Caco-2 (cell line): ENCODE measurements at regions of chr4 and their contacts with region 1.

Region 1: GRCh38 chr4:146522098-146522868 is 543 bp upstream of the SLC10A7 start:
- DNase-seq: peak; percentile 79 to 81
- H3K4me3 ChIP-seq: peak overlapping the region; percentile 88
- H3K4me3 Mint-ChIP-seq: no peak overlapping the region
- H3K27ac Mint-ChIP-seq: no peak overlapping the region
- H3K4me1 ChIP-seq: peaks cover 14% of the 10 kb centered on the region
- H3K4me1 Mint-ChIP-seq: peaks cover 5% of the 10 kb centered on the region
- H3K27me3 ChIP-seq: no peaks in the 10 kb centered on the region
- H3K27me3 Mint-ChIP-seq: no peaks in the 10 kb centered on the region
- CTCF ChIP-seq: no peak

Region 2: GRCh38 chr4:146342600-146343192 is 179.6 kb before region 1 on chr4:
- CTCF ChIA-PET with region 1: no interaction called
- POLR2A ChIA-PET with region 1: no interaction called
- intact Hi-C with region 1: loop called (anchors 2 kb)
- DNase-seq: peak in 1 of 2 experiments; percentile 39
- H3K4me3 ChIP-seq: no peak overlapping the region
- H3K4me3 Mint-ChIP-seq: no peak overlapping the region
- H3K27ac Mint-ChIP-seq: no peak overlapping the region
- H3K4me1 ChIP-seq: no peaks in the 10 kb centered on the region
- H3K4me1 Mint-ChIP-seq: no peaks in the 10 kb centered on the region
- H3K27me3 ChIP-seq: no peaks in the 10 kb centered on the region
- H3K27me3 Mint-ChIP-seq: no peaks in the 10 kb centered on the region
- CTCF ChIP-seq: peak; percentile 37 to 45

Region 3: DNA sequence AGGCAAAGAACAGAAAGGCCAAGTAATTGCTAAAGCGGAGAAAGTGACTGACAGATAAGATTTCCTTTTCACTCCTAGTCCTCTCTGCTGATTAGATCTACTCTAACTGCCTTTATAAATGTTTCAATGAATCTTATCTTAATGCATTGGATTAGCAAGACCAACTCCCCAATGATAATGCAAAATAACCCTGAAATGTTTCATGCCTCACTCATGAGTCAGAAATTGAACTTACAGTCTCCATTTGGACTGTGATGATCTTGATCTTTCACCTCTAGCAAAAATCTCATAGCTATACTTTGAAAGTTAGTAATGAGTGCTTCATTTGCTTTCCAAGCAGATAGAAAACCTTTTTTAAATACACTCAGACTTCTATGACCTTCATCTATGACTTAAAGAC is 27.0 kb before region 1 on chr4:
- CTCF ChIA-PET with region 1: no interaction called
- POLR2A ChIA-PET with region 1: no interaction called
- intact Hi-C with region 1: loop called (anchors 1 kb)
- DNase-seq: peak in 1 of 2 experiments; percentile 3
- H3K4me3 ChIP-seq: no peak overlapping the region
- H3K4me3 Mint-ChIP-seq: no peak overlapping the region
- H3K27ac Mint-ChIP-seq: no peak overlapping the region
- H3K4me1 ChIP-seq: peaks cover 8% of the 10 kb centered on the region; the same call in 1 of the 2 replicates
- H3K4me1 Mint-ChIP-seq: peaks cover 20% of the 10 kb centered on the region
- H3K27me3 ChIP-seq: no peaks in the 10 kb centered on the region
- H3K27me3 Mint-ChIP-seq: no peaks in the 10 kb centered on the region
- CTCF ChIP-seq: no peak

Region 4: DNA sequence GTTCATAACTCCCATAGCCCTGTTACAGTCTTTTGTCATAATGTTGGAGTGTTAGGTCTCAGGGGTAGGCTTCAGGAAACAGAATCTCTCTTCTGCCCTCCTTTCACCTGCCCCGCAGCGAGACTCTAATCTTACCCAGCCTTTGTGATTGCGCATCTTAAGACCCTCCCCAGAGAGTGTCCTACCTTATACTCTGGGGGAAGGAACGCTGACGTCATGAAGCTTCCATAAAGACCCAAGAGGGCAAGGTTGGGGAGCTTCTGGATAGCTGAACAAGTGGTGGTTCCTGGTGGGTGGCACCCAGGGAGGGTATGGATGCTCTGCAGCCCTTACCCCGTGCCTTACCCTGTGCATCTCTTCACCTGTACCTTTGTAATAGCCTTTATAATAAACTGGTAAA is 216.3 kb after region 1 on chr4:
- CTCF ChIA-PET with region 1: no interaction called
- POLR2A ChIA-PET with region 1: no interaction called
- intact Hi-C with region 1: no loop called
- DNase-seq: no peak
- H3K4me3 ChIP-seq: no peak overlapping the region
- H3K4me3 Mint-ChIP-seq: no peak overlapping the region
- H3K27ac Mint-ChIP-seq: no peak overlapping the region
- H3K4me1 ChIP-seq: no peaks in the 10 kb centered on the region
- H3K4me1 Mint-ChIP-seq: no peaks in the 10 kb centered on the region
- H3K27me3 ChIP-seq: no peaks in the 10 kb centered on the region
- H3K27me3 Mint-ChIP-seq: peaks cover 6% of the 10 kb centered on the region
- CTCF ChIP-seq: no peak